Esophagus muscularis mucosa (tissue), 4 donors: ENCODE measurements at regions of chrX and their contacts with region 1.

Region 1: DNA sequence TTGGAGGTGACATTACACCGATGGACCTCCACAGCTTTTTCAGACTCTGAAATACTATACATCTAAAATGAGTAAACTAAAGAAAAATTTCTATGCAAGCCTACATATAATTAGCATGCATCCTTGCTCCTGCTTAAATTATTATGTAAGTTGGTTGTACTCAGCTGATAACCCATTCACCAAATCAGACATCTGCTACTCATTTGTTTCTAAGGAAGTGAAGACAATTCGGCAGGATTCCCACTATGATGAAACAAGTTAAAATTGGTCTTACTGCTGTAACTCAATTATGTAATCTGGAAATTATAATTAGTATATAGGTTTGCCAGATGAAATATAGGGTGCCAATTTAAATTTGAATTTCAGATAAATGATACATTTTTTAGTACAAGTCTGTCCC is 59.5 kb upstream of the FGF13 start:
- DNase-seq: no peak
- H3K4me3 ChIP-seq: no peak overlapping the region
- H3K27ac ChIP-seq: no peak overlapping the region
- H3K4me1 ChIP-seq: no peaks in the 10 kb centered on the region
- H3K27me3 ChIP-seq: no peaks in the 10 kb centered on the region
- CTCF ChIP-seq: no peak
- EP300 ChIP-seq: no peak
- POLR2A ChIP-seq: no peak

Region 2: GRCh38 chrX:138692591-138692990 is 78.5 kb before region 1 on chrX:
- intact Hi-C with region 1: no loop called
- DNase-seq: no peak
- H3K4me3 ChIP-seq: no peak overlapping the region
- H3K27ac ChIP-seq: peak overlapping the region in 2 of 4 donors; percentile 7 to 45
- H3K4me1 ChIP-seq: peaks cover 0 to 36% (median 16%) of the 10 kb centered on the region in 4 donors
- H3K27me3 ChIP-seq: no peaks in the 10 kb centered on the region
- CTCF ChIP-seq: no peak
- EP300 ChIP-seq: no peak
- POLR2A ChIP-seq: no peak

Region 3: GRCh38 chrX:139559383-139560042 is 788.5 kb after region 1 on chrX:
- intact Hi-C with region 1: loop called (anchors 5 kb)
- DNase-seq: no peak
- H3K4me3 ChIP-seq: no peak overlapping the region
- H3K27ac ChIP-seq: no peak overlapping the region
- H3K4me1 ChIP-seq: no peaks in the 10 kb centered on the region
- H3K27me3 ChIP-seq: peaks cover 0 to 7% (median 0%) of the 10 kb centered on the region in 4 donors
- CTCF ChIP-seq: peak; percentile 28 to 44 (median 34)
- EP300 ChIP-seq: no peak
- POLR2A ChIP-seq: no peak